HepG2 (cell line): ENCODE measurements at regions of chr7 and their contacts with region 1.

Region 1: GRCh38 chr7:220151-220841 is 27.9 kb downstream of the FAM20C start:
- DNase-seq: peak; percentile 45
- ATAC-seq: peak; percentile 21
- H3K4me3 ChIP-seq: peak overlapping the region in 1 of 3 experiments; percentile 47; a peak in 1 of 6 replicates
- H3K27ac ChIP-seq: peak overlapping the region; percentile 85
- H3K4me1 ChIP-seq: peaks cover 35% of the 10 kb centered on the region
- H3K27me3 ChIP-seq: no peaks in the 10 kb centered on the region
- CTCF ChIP-seq: peak; percentile 58
- EP300 ChIP-seq: no peak
- POLR2A ChIP-seq: no peak
- RAD21 ChIP-seq: no peak

Region 2: GRCh38 chr7:194252-195000 is 25.9 kb before region 1 on chr7:
- CTCF ChIA-PET with region 1: no interaction called
- POLR2A ChIA-PET with region 1: interaction called, 22 read pairs
- in situ Hi-C with region 1: no loop called
- intact Hi-C with region 1: loop called (anchors 1 kb)
- DNase-seq: peak; percentile 90
- ATAC-seq: peak; percentile 67
- H3K4me3 ChIP-seq: peak overlapping the region; percentile 79 to 91 (median 82)
- H3K27ac ChIP-seq: peak overlapping the region; percentile 81
- H3K4me1 ChIP-seq: peaks cover 51% of the 10 kb centered on the region
- H3K27me3 ChIP-seq: peaks cover 2 to 9% of the 10 kb centered on the region in 2 experiments; a peak in 2 of 5 replicates
- CTCF ChIP-seq: no peak
- EP300 ChIP-seq: peak in 1 of 2 experiments; percentile 53; a peak in 2 of 4 replicates
- POLR2A ChIP-seq: peak in 1 of 2 experiments; percentile 84; a peak in 2 of 4 replicates
- RAD21 ChIP-seq: no peak

Region 3: GRCh38 chr7:234655-235578 is 14.6 kb after region 1 on chr7:
- CTCF ChIA-PET with region 1: no interaction called
- POLR2A ChIA-PET with region 1: interaction called, 16 read pairs
- in situ Hi-C with region 1: no loop called
- intact Hi-C with region 1: no loop called
- DNase-seq: peak; percentile 78
- ATAC-seq: peak; percentile 88
- H3K4me3 ChIP-seq: peak overlapping the region in 1 of 3 experiments; percentile 51; a peak in 1 of 6 replicates
- H3K27ac ChIP-seq: peak overlapping the region; percentile 61
- H3K4me1 ChIP-seq: peaks cover 28% of the 10 kb centered on the region
- H3K27me3 ChIP-seq: no peaks in the 10 kb centered on the region
- CTCF ChIP-seq: no peak
- EP300 ChIP-seq: peak in 1 of 2 experiments; percentile 57; a peak in 2 of 4 replicates
- POLR2A ChIP-seq: no peak
- RAD21 ChIP-seq: no peak

Region 4: GRCh38 chr7:260441-261281 is 40.4 kb after region 1 on chr7:
- CTCF ChIA-PET with region 1: no interaction called
- POLR2A ChIA-PET with region 1: no interaction called
- in situ Hi-C with region 1: no loop called
- intact Hi-C with region 1: no loop called
- DNase-seq: no peak
- ATAC-seq: peak; percentile 5; the same call in 2 of the 3 replicates
- H3K4me3 ChIP-seq: no peak overlapping the region
- H3K27ac ChIP-seq: no peak overlapping the region
- H3K4me1 ChIP-seq: no peaks in the 10 kb centered on the region
- H3K27me3 ChIP-seq: no peaks in the 10 kb centered on the region
- CTCF ChIP-seq: no peak
- EP300 ChIP-seq: no peak
- POLR2A ChIP-seq: no peak
- RAD21 ChIP-seq: no peak

Region 5: DNA sequence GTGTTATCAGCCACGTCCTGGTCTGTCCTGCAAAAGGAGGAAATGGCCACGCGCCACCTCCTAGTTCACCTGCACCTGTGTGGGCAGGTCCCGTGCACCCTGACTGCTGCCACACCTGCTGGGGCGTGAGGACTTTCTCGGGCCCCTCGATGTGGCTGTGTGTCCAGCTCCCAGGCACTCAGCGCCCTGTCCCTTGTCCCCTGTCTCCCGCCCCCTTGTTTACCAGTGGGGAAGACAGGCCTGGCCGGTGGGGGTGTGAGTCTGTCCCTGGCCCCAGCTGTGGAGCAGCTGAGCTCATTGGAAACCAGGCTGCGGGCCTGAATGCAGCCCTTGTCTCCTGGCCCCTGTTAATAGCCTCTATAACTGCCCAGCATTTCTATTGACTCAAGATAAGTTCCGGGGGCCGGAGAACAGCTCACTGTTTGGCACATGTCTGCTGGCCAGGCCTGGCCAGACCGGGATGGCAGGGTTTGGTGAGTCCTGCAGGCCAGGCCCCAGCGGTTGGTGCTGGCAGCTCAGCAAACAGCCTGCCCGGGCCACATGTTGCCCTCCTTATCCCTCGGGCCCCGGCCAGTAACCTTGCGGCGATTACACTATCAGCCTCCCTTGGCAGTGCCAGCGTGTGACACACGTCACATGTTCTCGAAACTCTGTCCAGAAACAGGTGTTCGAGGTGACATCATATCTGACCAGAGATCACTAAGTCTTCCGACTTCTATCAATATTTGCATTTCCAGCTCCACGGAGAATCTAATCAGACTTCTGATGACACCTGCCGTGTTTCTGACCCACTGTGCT is 121.7 kb after region 1 on chr7:
- CTCF ChIA-PET with region 1: no interaction called
- POLR2A ChIA-PET with region 1: no interaction called
- in situ Hi-C with region 1: no loop called
- intact Hi-C with region 1: no loop called
- DNase-seq: peak; percentile 90
- ATAC-seq: peak; percentile 74
- H3K4me3 ChIP-seq: peak overlapping the region in 2 of 3 experiments; percentile 10 to 57; a peak in 4 of 6 replicates
- H3K27ac ChIP-seq: peak overlapping the region; percentile 39
- H3K4me1 ChIP-seq: peaks cover 51% of the 10 kb centered on the region
- H3K27me3 ChIP-seq: peaks cover 0 to 34% of the 10 kb centered on the region in 2 experiments
- CTCF ChIP-seq: peak; percentile 24; the same call in 1 of the 2 replicates
- EP300 ChIP-seq: no peak; a peak in 1 of 4 replicates
- POLR2A ChIP-seq: no peak
- RAD21 ChIP-seq: no peak